Activated naive CD4-positive, alpha-beta T cell treated with anti-CD3 and anti-CD28 coated beads for 36 hours (primary cell): ENCODE measurements at regions of chrX and their contacts with region 1.

Region 1: GRCh38 chrX:129754056-129755024 is 15.6 kb downstream of the XPNPEP2 start:
- DNase-seq: peak; percentile 49
- H3K4me3 Mint-ChIP-seq: peak overlapping the region; percentile 15
- H3K27ac Mint-ChIP-seq: peak overlapping the region; percentile 8
- H3K4me1 Mint-ChIP-seq: peaks cover 45% of the 10 kb centered on the region
- H3K27me3 Mint-ChIP-seq: no peaks in the 10 kb centered on the region

Region 2: DNA sequence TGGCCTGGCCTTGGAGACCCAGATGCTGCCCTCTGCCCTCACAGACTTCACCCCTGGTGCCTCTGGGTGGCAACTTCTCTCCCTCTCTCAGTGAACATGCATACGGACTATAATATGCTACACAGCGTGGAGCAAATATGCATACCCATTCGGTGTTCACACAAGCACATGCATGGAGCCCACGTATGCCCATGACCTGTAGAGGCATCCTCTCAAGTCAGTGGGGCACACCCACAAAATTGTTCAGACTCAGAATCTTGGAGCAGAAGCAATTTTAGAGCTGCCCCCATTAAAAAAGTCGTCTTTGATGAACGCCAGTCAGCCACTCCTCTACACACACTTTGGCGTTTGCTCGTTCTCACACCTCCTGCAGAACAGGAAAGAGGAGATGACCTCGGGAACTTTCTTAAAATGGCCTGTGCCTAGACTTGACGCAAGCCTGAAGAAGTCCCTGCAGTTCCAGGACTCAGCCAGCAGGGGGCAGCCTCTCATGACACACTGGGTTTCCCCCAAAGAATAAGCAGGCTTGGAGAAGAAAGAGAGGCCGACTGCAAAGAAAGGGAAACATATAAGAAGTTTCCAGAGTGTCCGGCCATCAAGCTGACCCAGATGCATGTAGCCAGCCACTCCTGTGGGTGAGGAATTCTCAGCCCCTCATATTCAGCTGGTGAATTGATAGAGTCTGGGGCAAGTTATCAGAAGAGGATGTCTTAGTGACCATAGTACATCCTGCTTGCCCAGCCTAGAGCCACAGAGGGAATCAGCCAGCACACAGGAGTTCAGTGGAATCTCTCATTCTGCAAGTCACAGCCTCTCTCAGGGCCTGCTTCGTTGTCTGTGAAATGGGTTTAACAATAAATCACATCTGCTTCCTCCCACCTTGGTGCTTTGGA is 116.9 kb before region 1 on chrX:
- CTCF ChIA-PET with region 1: interaction called, 5 read pairs
- intact Hi-C with region 1: loop called (anchors 1 kb)
- DNase-seq: peak; percentile 86
- H3K4me3 Mint-ChIP-seq: no peak overlapping the region
- H3K27ac Mint-ChIP-seq: no peak overlapping the region
- H3K4me1 Mint-ChIP-seq: peaks cover 1% of the 10 kb centered on the region
- H3K27me3 Mint-ChIP-seq: no peaks in the 10 kb centered on the region

Region 3: DNA sequence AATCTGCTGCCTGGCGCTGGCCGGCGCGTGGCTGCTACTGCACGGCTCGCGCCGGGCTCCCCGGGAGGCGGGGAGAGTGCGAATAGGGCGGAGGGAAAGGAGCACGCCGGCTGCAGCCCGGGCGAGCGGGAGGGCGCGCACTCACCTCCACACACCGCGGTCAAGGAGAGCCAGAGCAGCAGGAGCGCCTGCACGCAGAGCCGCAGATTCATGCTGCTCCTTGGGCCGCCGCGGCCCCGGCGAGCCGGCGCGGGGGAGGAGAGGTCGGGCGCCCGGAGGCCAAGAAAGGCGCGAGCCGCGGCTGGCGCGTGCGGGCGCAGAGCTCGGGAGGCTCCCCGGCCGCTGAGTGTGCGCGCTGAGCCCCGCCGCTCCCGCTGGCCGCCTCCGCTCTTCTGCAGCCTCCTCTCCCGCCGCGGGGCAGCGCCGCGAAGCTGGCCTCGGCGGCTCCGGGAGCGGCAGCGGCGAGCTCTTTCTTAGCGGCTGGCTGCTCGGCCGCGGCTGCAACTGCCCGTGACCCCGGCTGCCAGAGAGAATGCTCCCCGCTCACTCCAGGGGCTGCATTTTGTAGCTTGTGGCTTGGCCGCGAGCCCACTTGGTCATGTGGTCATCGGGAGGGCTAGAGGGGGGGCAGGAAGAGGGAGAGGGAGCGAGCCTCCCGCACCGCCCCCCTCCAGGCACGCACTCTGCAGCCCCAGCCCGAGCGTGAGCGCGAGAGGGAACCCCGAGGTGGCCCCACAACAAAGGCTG is 99.7 kb before region 1 on chrX and contains the start of gene APLN:
- CTCF ChIA-PET with region 1: interaction called, 6 read pairs
- intact Hi-C with region 1: loop called (anchors 1 kb)
- DNase-seq: no peak
- H3K4me3 Mint-ChIP-seq: peak within 1 kb of the TSS; percentile 61
- H3K27ac Mint-ChIP-seq: no peak within 1 kb of the TSS
- H3K4me1 Mint-ChIP-seq: peaks cover 6% of the 10 kb centered on the region
- H3K27me3 Mint-ChIP-seq: peaks cover 11% of the 10 kb centered on the region
- total RNA-seq, gene APLN: 0.15 to 0.36 TPM

Region 4: GRCh38 chrX:129769467-129770353 is 15.4 kb after region 1 on chrX:
- CTCF ChIA-PET with region 1: interaction called, 10 read pairs
- intact Hi-C with region 1: loop called (anchors 1 kb)
- DNase-seq: peak; percentile 68
- H3K4me3 Mint-ChIP-seq: no peak overlapping the region
- H3K27ac Mint-ChIP-seq: peak overlapping the region; percentile 77
- H3K4me1 Mint-ChIP-seq: peaks cover 62% of the 10 kb centered on the region
- H3K27me3 Mint-ChIP-seq: no peaks in the 10 kb centered on the region

Region 5: DNA sequence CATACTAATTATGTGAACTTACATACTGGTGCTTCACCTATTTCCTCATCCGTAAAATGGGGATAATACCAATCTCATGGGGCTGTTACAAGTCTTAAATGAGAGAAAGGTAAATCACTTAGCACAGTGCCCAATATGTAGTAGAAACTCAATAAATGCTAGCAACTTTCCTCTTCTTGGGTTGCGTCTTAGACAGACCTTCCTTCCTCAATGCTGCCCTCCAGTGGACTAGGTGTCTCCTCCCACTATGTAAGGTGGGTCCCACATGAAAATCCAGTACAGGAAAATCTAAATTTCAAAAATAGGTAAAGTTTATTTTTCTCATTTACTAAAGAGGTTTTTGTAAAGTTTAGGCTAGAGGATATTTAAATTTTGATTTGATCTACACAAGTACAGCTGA is 68.8 kb after region 1 on chrX:
- CTCF ChIA-PET with region 1: interaction called, 12 read pairs
- intact Hi-C with region 1: loop called (anchors 1 kb)
- DNase-seq: peak; percentile 73
- H3K4me3 Mint-ChIP-seq: no peak overlapping the region
- H3K27ac Mint-ChIP-seq: no peak overlapping the region
- H3K4me1 Mint-ChIP-seq: peaks cover 13% of the 10 kb centered on the region
- H3K27me3 Mint-ChIP-seq: no peaks in the 10 kb centered on the region

Region 6: GRCh38 chrX:129876771-129877305 is 122.5 kb after region 1 on chrX:
- CTCF ChIA-PET with region 1: no interaction called
- intact Hi-C with region 1: no loop called
- DNase-seq: no peak
- H3K4me3 Mint-ChIP-seq: no peak overlapping the region
- H3K27ac Mint-ChIP-seq: no peak overlapping the region
- H3K4me1 Mint-ChIP-seq: no peaks in the 10 kb centered on the region
- H3K27me3 Mint-ChIP-seq: no peaks in the 10 kb centered on the region

Region 7: DNA sequence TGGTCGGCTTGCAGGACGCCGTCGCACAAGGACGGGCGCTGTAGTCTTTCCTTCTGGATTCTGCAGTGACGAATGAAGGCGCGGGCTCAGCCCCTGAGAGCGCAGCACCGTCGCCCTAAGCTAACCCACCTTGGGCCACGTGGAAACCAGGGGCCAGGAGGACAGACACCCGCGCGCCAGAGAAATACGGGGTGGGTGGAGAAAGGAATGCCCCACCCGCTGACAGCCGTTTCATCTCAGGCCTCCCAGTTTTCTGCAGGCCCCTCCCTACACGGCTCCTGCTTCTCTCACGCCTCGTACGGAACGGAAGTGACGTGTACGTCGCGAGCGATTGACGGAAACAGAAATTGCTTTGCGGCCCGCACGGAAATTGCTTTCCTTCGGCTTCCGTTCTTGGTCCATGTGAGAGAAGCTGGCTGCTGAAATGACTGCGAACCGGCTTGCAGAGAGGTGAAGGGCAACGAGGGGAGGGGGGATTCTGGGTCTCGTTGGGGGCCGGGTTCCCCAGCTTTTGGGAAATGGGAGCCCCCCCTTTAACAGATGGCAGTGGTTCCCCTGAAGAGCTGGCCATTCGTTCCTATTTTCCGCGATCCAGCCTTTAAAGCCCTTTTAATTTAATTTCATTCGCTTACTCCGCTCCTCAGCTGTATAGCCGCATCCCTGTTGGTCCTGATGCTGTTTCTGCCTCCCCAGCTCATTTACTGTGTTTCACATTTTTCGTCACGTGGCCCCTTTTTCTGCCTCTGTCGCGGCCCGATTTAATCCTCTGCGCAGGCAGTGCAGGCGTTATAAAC is 151.6 kb after region 1 on chrX and contains the start of gene UTP14A:
- CTCF ChIA-PET with region 1: no interaction called
- intact Hi-C with region 1: loop called (anchors 1 kb)
- DNase-seq: peak; percentile 92
- H3K4me3 Mint-ChIP-seq: peak within 1 kb of the TSS; percentile 84
- H3K27ac Mint-ChIP-seq: peak within 1 kb of the TSS; percentile 82
- H3K4me1 Mint-ChIP-seq: peaks cover 31% of the 10 kb centered on the region
- H3K27me3 Mint-ChIP-seq: no peaks in the 10 kb centered on the region
- total RNA-seq, gene UTP14A: 21.5 to 22.6 TPM